GM12878 (cell line): ENCODE measurements at regions of chr11 and their contacts with region 1.

Region 1: DNA sequence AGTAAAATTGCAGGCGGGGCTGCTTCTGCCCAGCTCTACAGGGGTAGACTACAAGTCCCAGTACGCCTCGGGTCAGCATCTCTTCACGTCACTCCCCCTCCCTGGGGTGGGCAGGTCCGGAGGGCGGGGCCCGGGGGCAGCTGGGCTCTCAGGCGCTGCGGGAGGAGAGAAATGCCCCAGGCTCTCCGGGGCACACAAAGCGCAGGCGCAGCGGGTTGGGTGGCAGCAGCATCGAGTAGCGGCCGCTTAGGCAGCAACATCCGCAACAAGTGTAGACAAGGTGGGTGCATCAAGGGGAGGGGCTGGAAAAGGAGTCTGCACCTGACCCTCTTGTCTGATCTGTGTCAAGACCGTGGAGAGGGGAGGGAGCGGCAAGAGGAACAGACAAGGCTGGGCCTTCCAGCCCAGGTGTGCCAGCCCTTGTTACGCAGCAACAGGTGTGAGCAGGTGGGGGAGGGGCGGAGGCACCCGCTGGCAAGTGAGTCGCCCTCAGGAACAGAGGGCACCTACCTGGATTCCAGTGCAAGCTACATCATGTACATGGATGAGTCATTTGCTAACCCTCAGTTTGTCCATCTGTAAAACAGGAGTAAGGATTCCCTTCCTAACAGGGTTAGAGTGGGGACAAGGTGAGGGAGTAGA is 1.2 kb downstream of the PLEKHB1 start:
- DNase-seq: peak; percentile 40
- ATAC-seq: peak; percentile 100
- H3K4me3 ChIP-seq: peak overlapping the region; percentile 8; the same call in 1 of the 2 replicates
- H3K27ac ChIP-seq: no peak overlapping the region
- H3K4me1 ChIP-seq: no peaks in the 10 kb centered on the region
- H3K27me3 ChIP-seq: no peaks in the 10 kb centered on the region
- CTCF ChIP-seq: no peak
- EP300 ChIP-seq: no peak
- POLR2A ChIP-seq: no peak
- RAD21 ChIP-seq: no peak

Region 2: DNA sequence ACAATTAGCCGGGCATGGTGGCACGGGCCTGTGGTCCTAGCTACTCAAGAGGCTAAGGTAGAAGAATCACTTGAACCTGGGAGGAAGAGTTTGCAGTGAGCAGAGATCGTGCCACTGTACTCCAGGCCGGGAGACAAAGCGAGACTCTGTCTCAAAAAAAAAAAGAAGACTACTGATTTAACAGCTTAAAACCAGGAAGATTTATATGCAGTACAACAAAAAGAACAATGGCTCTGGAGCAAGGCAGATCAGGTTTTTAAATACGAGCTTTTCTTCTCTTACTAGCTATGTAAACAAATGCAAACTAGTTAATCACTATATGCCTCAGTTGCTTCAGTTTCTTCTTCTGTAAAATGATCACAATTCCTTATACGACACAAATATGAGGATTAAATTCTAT is 56.6 kb before region 1 on chr11:
- CTCF ChIA-PET with region 1: no interaction called
- POLR2A ChIA-PET with region 1: no interaction called
- RAD21 ChIA-PET with region 1: no interaction called
- SMC1A ChIA-PET with region 1: interaction called, 10 read pairs
- in situ Hi-C with region 1: no loop called
- intact Hi-C with region 1: no loop called
- DNase-seq: no peak
- ATAC-seq: no peak
- H3K4me3 ChIP-seq: no peak overlapping the region
- H3K27ac ChIP-seq: no peak overlapping the region
- H3K4me1 ChIP-seq: no peaks in the 10 kb centered on the region
- H3K27me3 ChIP-seq: no peaks in the 10 kb centered on the region
- CTCF ChIP-seq: no peak
- EP300 ChIP-seq: no peak
- POLR2A ChIP-seq: no peak
- RAD21 ChIP-seq: no peak